ENCODE measurements at regions of chr11 and their contacts with region 1.

Region 1: GRCh38 chr11:133927690-133928627 is 28.8 kb downstream of the IGSF9B start:
- DNase-seq: peak; percentile 62
- H3K4me3 Mint-ChIP-seq: peak overlapping the region; percentile 67
- H3K27ac Mint-ChIP-seq: peak overlapping the region; percentile 98
- H3K4me1 Mint-ChIP-seq: peaks cover 32% of the 10 kb centered on the region
- H3K27me3 Mint-ChIP-seq: no peaks in the 10 kb centered on the region

Region 2: GRCh38 chr11:133947321-133947756 is 19.4 kb after region 1 on chr11:
- intact Hi-C with region 1: loop called (anchors 1 kb)
- DNase-seq: peak; percentile 67
- H3K4me3 Mint-ChIP-seq: peak overlapping the region; percentile 69
- H3K27ac Mint-ChIP-seq: peak overlapping the region; percentile 76
- H3K4me1 Mint-ChIP-seq: peaks cover 67% of the 10 kb centered on the region
- H3K27me3 Mint-ChIP-seq: no peaks in the 10 kb centered on the region

Region 3: GRCh38 chr11:134033696-134034491 is 105.9 kb after region 1 on chr11:
- intact Hi-C with region 1: loop called (anchors 1 kb)
- DNase-seq: peak; percentile 67
- H3K4me3 Mint-ChIP-seq: no peak overlapping the region
- H3K27ac Mint-ChIP-seq: no peak overlapping the region
- H3K4me1 Mint-ChIP-seq: peaks cover 40% of the 10 kb centered on the region
- H3K27me3 Mint-ChIP-seq: peaks cover 18% of the 10 kb centered on the region

Region 4: GRCh38 chr11:134139873-134140331 is 211.9 kb after region 1 on chr11:
- intact Hi-C with region 1: loop called (anchors 5 kb)
- DNase-seq: peak; percentile 27
- H3K4me3 Mint-ChIP-seq: no peak overlapping the region
- H3K27ac Mint-ChIP-seq: no peak overlapping the region
- H3K4me1 Mint-ChIP-seq: peaks cover 13% of the 10 kb centered on the region
- H3K27me3 Mint-ChIP-seq: no peaks in the 10 kb centered on the region

Region 5: GRCh38 chr11:134275534-134276395 is 347.8 kb after region 1 on chr11 and contains the start of gene GLB1L3:
- intact Hi-C with region 1: loop called (anchors 2 kb)
- DNase-seq: peak; percentile 82
- H3K4me3 Mint-ChIP-seq: peak within 1 kb of the TSS; percentile 87
- H3K27ac Mint-ChIP-seq: peak within 1 kb of the TSS; percentile 96
- H3K4me1 Mint-ChIP-seq: peaks cover 56% of the 10 kb centered on the region
- H3K27me3 Mint-ChIP-seq: peaks cover 2% of the 10 kb centered on the region
- total RNA-seq, gene GLB1L3: 14.5 and 15.4 TPM in 2 replicates

Measured in activated T-helper 2 cell treated with anti-CD3 and anti-CD28 coated beads, Interferon-gamma antibody, Interleukin-2, Interleukin-4, amounts not matched to agents 10 μg/mL and 5 μg/mL and 100 μg/mL, durations not matched to agents 14 hours and 24 hours and 36 hours (primary cell).